Aorta (tissue), 5 donors: ENCODE measurements at regions of chr17 and their contacts with region 1.

Region 1: GRCh38 chr17:2336215-2336851 is at the start of gene TSR1:
- DNase-seq: peak; percentile 93 to 97
- ATAC-seq: peak; percentile 97
- H3K4me3 ChIP-seq: peak within 1 kb of the TSS; percentile 92 to 96
- H3K27ac ChIP-seq: peak within 1 kb of the TSS in 1 of 2 donors; percentile 29
- H3K4me1 ChIP-seq: no peaks in the 10 kb centered on the region
- H3K27me3 ChIP-seq: no peaks in the 10 kb centered on the region
- total RNA-seq, gene TSR1: 18.5 to 21.8 TPM

Region 2: GRCh38 chr17:2380226-2380922 is 44.0 kb after region 1 on chr17:
- intact Hi-C with region 1: no loop called
- DNase-seq: no peak
- ATAC-seq: no peak
- H3K4me3 ChIP-seq: no peak overlapping the region
- H3K27ac ChIP-seq: no peak overlapping the region
- H3K4me1 ChIP-seq: no peaks in the 10 kb centered on the region
- H3K27me3 ChIP-seq: no peaks in the 10 kb centered on the region

Region 3: DNA sequence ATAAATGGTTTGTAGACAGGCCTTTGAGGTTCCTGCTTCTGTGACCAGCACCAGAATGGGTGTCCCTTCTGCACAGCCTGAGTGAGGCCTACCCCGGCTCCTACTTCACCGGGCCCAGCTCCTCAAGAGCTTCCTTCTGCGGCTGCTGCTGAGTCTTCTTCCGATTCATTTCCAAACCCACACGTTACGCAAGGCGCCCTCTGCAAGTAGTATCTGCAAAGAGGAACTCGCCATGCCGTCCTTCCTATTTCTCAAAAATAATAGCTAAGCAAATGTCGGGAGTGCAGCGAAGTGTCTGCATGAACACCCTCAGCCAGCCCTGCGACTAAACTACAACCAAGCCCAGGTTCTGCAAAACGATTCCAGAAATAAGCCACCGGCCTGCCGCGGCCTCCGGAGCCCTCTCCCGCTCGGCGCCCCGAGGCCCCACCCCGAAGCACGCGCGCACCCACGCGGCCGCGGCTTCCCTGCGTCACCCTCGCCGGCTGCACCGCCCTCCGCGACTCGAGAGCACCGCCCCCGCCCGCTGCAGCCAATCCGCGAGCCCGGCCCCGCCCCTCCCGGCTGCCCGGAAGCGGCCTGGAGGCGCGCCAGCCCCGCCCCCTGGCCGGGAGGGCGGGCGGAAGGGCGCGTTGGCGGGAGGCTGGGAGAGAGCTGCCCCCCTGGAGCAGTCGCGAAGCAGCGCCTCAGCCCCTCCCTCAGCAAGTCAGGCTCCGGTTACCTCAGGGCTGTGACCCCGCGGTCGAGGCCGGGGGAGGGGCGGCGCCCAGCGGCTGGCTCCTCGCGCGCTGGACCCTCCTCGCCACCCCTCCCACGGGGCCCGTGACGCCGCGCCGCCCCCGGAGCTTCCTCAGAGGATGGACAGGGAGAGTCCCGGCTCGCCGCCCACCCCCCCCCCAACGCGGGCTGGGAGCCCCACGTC is 56.2 kb after region 1 on chr17:
- intact Hi-C with region 1: loop called in 1 of 2 experiments (anchors 5 kb)
- DNase-seq: peak; percentile 97 to 98
- ATAC-seq: peak; percentile 81
- H3K4me3 ChIP-seq: peak overlapping the region; percentile 79 to 82
- H3K27ac ChIP-seq: peak overlapping the region; percentile 87 to 95
- H3K4me1 ChIP-seq: peaks cover 0 to 2% of the 10 kb centered on the region in 2 donors
- H3K27me3 ChIP-seq: no peaks in the 10 kb centered on the region

Region 4: GRCh38 chr17:2416010-2416734 is 79.8 kb after region 1 on chr17:
- intact Hi-C with region 1: loop called in 1 of 2 experiments (anchors 10 kb)
- DNase-seq: peak; percentile 90 to 97
- ATAC-seq: peak; percentile 92
- H3K4me3 ChIP-seq: no peak overlapping the region
- H3K27ac ChIP-seq: peak overlapping the region in 1 of 2 donors; percentile 21
- H3K4me1 ChIP-seq: no peaks in the 10 kb centered on the region
- H3K27me3 ChIP-seq: no peaks in the 10 kb centered on the region